Activated naive CD8-positive, alpha-beta T cell treated with anti-CD3 and anti-CD28 coated beads, Interleukin-2, amount 10 ng/mL, durations not matched to agents 7 days and 5 days (primary cell): ENCODE measurements at regions of chr17 and their contacts with region 1.

Region 1: GRCh38 chr17:41918314-41919164 is at the start of gene ACLY:
- DNase-seq: peak; percentile 99
- ATAC-seq: peak; percentile 95
- H3K4me3 Mint-ChIP-seq: peak within 1 kb of the TSS; percentile 98
- H3K27ac Mint-ChIP-seq: peak within 1 kb of the TSS; percentile 97
- H3K4me1 Mint-ChIP-seq: peaks cover 30% of the 10 kb centered on the region
- H3K27me3 Mint-ChIP-seq: no peaks in the 10 kb centered on the region
- total RNA-seq, gene ACLY: 142 to 153 TPM

Region 2: GRCh38 chr17:41966463-41967140 is 48.1 kb after region 1 on chr17 and contains the start of gene CNP:
- POLR2A ChIA-PET with region 1: interaction called, 12 read pairs
- DNase-seq: peak; percentile 96
- ATAC-seq: peak; percentile 77
- H3K4me3 Mint-ChIP-seq: peak within 1 kb of the TSS; percentile 87
- H3K27ac Mint-ChIP-seq: peak within 1 kb of the TSS; percentile 86
- H3K4me1 Mint-ChIP-seq: peaks cover 28% of the 10 kb centered on the region
- H3K27me3 Mint-ChIP-seq: peaks cover 2% of the 10 kb centered on the region
- total RNA-seq, gene CNP: 75.8 to 83.0 TPM